ENCODE measurements at regions of chr4 and their contacts with region 1.

Region 1: GRCh38 chr4:94913316-94913715 is 155.6 kb downstream of the BMPR1B start:
- DNase-seq: no peak
- H3K4me3 ChIP-seq: no peak overlapping the region
- H3K27ac ChIP-seq: no peak overlapping the region
- H3K4me1 ChIP-seq: no peaks in the 10 kb centered on the region
- H3K27me3 ChIP-seq: no peaks in the 10 kb centered on the region
- CTCF ChIP-seq: no peak

Region 2: GRCh38 chr4:93865650-93866049 is 1047.7 kb before region 1 on chr4:
- CTCF ChIA-PET with region 1: interaction called, 24 read pairs
- POLR2A ChIA-PET with region 1: no interaction called
- intact Hi-C with region 1: no loop called
- DNase-seq: no peak
- H3K4me3 ChIP-seq: no peak overlapping the region
- H3K27ac ChIP-seq: no peak overlapping the region
- H3K4me1 ChIP-seq: no peaks in the 10 kb centered on the region
- H3K27me3 ChIP-seq: no peaks in the 10 kb centered on the region
- CTCF ChIP-seq: no peak